ENCODE measurements at regions of chrX and their contacts with region 1.

Region 1: DNA sequence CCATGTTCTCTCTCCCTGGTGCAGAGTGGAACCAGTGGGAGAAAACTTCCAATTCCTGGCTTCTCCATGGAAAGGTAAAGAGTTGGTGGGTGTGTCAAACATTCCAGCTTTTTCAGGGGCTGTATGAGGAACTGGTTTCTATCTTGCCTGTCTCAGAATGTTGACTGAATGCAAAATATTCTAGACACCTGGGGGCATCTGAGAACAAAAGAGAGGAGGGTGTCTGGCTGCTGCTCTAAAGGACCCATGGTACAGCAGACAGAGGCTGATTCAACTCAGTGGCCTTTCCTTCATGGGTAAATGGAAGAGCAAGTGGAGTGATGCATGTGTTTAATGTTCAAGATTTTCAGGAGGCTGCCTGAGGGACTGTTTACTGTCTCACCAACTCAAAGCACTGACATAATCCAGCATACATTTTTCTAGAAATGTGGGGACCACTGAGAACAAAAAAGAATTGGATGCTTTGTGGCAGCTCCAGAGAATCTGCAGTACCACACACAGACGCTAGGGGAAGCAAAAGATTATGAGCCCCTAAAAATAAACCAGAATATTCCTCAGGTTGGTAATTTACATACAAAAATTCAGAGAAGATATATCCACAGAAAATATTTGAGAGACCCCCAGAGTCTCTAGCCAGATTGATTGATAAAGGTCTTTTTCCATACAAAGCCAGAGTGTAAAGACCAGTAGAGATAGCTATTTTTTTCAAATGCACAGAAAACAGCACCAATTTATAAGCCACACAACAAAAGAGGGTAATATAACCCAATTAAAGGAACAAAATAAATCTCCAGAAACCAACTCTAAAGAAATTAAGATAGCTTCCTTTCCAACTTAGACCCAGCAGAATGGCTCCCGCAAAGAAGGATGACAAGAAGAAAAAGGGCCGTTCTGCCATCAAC is 48.0 kb upstream of the STARD8 start:
- DNase-seq: peak; percentile 15
- H3K4me3 ChIP-seq: no peak overlapping the region
- H3K27ac ChIP-seq: no peak overlapping the region
- H3K4me1 ChIP-seq: no peaks in the 10 kb centered on the region
- H3K27me3 ChIP-seq: no peaks in the 10 kb centered on the region
- CTCF ChIP-seq: peak; percentile 76
- EP300 ChIP-seq: no peak
- RAD21 ChIP-seq: peak; percentile 59

Region 2: DNA sequence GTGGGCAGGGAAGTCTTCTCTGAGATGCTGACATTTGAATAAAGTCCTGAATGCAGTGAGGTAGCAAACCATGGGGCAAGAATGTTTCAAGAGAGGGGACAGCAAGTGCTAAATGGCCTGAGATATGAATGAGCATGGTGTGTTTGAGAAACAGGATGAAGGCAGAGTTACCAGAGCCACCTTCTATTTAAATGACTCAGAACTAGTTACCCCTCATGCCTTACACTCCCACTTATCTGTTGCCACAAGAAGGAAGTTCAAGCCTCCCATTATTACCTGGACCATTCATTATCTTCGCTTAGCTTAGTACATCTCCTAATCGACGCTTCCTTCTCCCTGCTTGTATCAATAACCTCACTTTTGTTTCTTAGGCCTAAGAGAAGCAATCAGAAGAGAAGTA is 19.7 kb before region 1 on chrX:
- CTCF ChIA-PET with region 1: interaction called, 17 read pairs
- POLR2A ChIA-PET with region 1: no interaction called
- DNase-seq: no peak
- H3K4me3 ChIP-seq: no peak overlapping the region
- H3K27ac ChIP-seq: no peak overlapping the region
- H3K4me1 ChIP-seq: no peaks in the 10 kb centered on the region
- H3K27me3 ChIP-seq: peaks cover 11% of the 10 kb centered on the region; the same call in 1 of the 2 replicates
- CTCF ChIP-seq: no peak
- EP300 ChIP-seq: no peak
- RAD21 ChIP-seq: no peak

Region 3: DNA sequence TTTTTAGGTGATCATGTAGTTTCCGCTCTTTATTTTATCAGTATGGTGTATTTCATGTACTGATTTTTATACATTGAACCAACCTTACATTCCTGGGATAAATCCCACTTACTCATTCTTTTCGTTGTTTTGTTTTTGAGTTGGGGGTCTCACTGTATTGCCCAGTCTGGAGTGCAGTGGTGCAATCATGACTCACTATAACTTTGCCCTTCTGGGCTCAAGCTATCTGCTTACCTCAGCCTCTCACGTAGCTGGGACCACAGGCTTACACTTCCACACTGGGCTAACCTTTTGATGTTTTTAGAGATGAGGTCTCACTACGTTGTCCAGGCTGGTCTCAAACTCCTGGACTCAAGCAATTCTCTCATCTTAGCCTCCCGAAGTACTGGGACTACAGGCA is 28.5 kb after region 1 on chrX:
- CTCF ChIA-PET with region 1: interaction called, 10 read pairs
- POLR2A ChIA-PET with region 1: no interaction called
- DNase-seq: no peak
- H3K4me3 ChIP-seq: no peak overlapping the region
- H3K27ac ChIP-seq: no peak overlapping the region
- H3K4me1 ChIP-seq: no peaks in the 10 kb centered on the region
- H3K27me3 ChIP-seq: peaks cover 12% of the 10 kb centered on the region; the same call in 1 of the 2 replicates
- CTCF ChIP-seq: no peak
- EP300 ChIP-seq: no peak
- RAD21 ChIP-seq: no peak

Measured in SK-N-SH (cell line).